Psoas muscle (tissue), 8 donors: ENCODE measurements at regions of chr12 and their contacts with region 1.

Region 1: GRCh38 chr12:119115296-119115905 is 63.3 kb upstream of the HSPB8 start:
- DNase-seq: no peak
- ATAC-seq: peak; percentile 81 to 90 (median 84)
- H3K4me3 ChIP-seq: peak overlapping the region; percentile 35
- H3K27ac ChIP-seq: no peak overlapping the region
- H3K4me1 ChIP-seq: peaks cover 15% of the 10 kb centered on the region
- H3K27me3 ChIP-seq: no peaks in the 10 kb centered on the region
- CTCF ChIP-seq: peak; percentile 94

Region 2: DNA sequence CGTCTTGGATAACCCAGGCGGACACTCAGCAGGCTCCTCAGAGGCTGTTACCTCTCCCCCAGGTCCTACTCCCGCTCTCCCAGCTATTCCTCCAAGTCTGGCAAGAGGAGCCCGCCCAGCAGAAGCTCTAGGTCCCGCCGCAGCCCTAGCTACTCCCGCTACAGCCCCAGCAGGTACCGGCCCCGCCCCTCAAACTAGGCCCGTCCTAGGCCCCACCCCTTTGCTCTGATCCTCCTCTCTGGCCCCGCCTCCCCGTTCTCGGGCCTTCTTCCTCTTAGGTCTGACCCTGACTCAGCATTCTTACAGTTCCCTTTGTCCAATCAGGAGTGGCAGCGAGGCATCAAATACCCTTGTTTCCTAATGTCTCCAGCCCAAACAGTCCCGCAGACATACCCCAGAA is 38.1 kb after region 1 on chr12:
- intact Hi-C with region 1: no loop called
- DNase-seq: peak; percentile 68 to 84
- ATAC-seq: peak in 3 of 4 donors; percentile 35 to 46 (median 42)
- H3K4me3 ChIP-seq: peak overlapping the region; percentile 41
- H3K27ac ChIP-seq: peak overlapping the region; percentile 68
- H3K4me1 ChIP-seq: peaks cover 23% of the 10 kb centered on the region
- H3K27me3 ChIP-seq: no peaks in the 10 kb centered on the region
- CTCF ChIP-seq: no peak

Region 3: GRCh38 chr12:119198421-119198820 is 83.0 kb after region 1 on chr12:
- intact Hi-C with region 1: loop called in 1 of 2 experiments (anchors 5 kb)
- DNase-seq: peak in 1 of 2 donors; percentile 42
- ATAC-seq: peak; percentile 22 to 33 (median 28)
- H3K4me3 ChIP-seq: no peak overlapping the region
- H3K27ac ChIP-seq: peak overlapping the region; percentile 67
- H3K4me1 ChIP-seq: no peaks in the 10 kb centered on the region
- H3K27me3 ChIP-seq: no peaks in the 10 kb centered on the region
- CTCF ChIP-seq: no peak

Region 4: GRCh38 chr12:119274636-119275065 is 159.2 kb after region 1 on chr12:
- intact Hi-C with region 1: loop called (anchors 2 to 5 kb)
- DNase-seq: no peak
- ATAC-seq: peak; percentile 54 to 96 (median 75)
- H3K4me3 ChIP-seq: no peak overlapping the region
- H3K27ac ChIP-seq: no peak overlapping the region
- H3K4me1 ChIP-seq: no peaks in the 10 kb centered on the region
- H3K27me3 ChIP-seq: no peaks in the 10 kb centered on the region
- CTCF ChIP-seq: peak; percentile 24